CD8-positive, alpha-beta T cell (primary cell): ENCODE measurements at regions of chr10 and their contacts with region 1.

Region 1: DNA sequence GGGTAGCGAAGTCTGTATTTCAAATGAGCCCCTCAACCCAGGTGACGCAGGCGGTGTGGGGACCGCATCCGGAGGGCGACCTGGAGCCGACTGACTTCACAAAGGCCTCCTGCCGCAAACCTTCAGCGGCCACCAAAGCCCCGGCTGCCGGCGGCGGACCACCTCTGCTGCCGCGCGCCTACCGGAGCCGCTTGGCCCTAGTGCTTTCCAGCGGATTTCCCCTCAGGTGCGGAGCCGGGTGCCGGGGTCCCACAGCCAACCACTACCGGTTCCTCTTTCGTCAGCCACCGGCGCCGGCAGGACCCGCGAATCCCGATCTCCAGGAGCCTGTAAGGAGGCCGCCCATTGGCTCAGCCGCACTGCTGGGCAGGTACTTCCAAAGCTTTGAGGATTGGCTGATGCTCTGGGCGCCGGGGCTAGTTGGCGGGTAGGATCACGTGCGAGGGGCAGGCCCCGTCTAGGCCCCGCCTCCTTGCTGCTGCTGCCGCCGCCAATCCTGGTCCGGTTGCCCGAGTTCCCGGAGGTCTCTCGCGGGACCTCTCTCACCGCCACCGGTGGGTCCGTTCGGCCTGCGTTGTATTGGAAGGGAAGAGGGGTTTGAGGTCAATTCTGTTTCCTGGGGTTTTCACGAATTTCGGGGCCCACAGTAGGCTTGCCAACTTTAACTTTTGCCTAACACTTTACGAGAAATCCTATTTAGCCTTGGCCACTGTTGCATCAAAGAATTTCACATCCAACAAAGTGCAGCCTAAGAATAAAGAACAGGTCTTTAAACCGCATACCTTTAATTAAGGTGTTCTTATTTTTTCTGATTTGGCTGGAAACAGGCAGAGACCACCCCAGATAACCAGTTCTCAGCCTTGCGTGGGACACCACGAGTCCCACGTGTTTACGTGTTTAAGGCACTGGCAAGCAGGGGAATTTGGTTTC is at the start of gene GSTO2:
- DNase-seq: peak; percentile 94 to 99 (median 97)
- ATAC-seq: peak; percentile 89
- H3K4me3 ChIP-seq: peak within 1 kb of the TSS; percentile 81 to 82
- H3K4me3 Mint-ChIP-seq: peak within 1 kb of the TSS; percentile 94
- H3K27ac ChIP-seq: peak within 1 kb of the TSS; percentile 90 to 93
- H3K27ac Mint-ChIP-seq: peak within 1 kb of the TSS; percentile 96
- H3K4me1 ChIP-seq: peaks cover 26% of the 10 kb centered on the region
- H3K4me1 Mint-ChIP-seq: peaks cover 48% of the 10 kb centered on the region
- H3K27me3 ChIP-seq: no peaks in the 10 kb centered on the region
- H3K27me3 Mint-ChIP-seq: peaks cover 1% of the 10 kb centered on the region
- CTCF ChIP-seq: no peak
- total RNA-seq, gene GSTO2: 0.49 to 0.75 TPM

Region 2: DNA sequence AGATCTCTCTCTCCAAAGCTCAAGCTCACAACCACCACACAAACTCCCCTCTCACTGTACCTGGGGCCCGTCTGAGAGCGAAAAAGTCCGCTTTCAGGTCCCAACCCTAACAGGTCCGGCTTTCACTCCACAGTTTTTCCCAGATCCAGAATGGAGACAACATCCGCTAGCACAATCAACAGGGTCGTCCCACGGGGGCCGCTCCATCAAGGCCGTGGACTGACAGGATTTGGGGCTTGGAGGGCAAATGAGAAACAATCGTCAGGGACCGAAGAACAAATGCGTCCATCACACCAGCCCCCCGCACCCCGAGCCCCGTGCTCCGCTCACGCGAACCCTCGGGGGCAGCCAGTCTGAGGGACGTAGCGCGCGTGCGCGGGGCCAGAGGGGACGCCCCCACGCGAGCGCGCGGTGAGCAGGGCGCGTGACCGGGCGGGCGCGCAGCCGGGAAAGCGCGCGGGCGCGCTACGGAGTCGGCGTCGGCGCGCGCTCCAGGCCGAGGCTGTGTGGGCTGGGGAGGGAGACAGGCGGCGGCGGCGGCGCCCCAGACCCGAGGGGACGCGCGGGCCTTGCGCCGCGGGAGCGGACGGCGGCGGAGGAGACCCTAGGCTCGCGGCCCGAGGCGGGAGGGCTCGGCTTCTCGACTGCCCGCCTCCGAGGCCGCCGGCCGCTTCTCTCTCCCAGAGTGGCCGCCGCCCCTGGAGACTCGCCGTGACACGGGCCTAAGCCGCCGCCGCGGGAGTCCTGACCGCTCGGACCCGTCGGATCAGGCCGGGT is 302.1 kb before region 1 on chr10 and contains the start of gene SLK:
- CTCF ChIA-PET with region 1: no interaction called
- POLR2A ChIA-PET with region 1: no interaction called
- intact Hi-C with region 1: loop called in 1 of 2 experiments (anchors 5 kb)
- DNase-seq: peak; percentile 72 to 95 (median 84)
- ATAC-seq: peak; percentile 83
- H3K4me3 ChIP-seq: peak within 1 kb of the TSS; percentile 96 to 97
- H3K4me3 Mint-ChIP-seq: peak within 1 kb of the TSS; percentile 96
- H3K27ac ChIP-seq: peak within 1 kb of the TSS; percentile 83 to 86
- H3K27ac Mint-ChIP-seq: peak within 1 kb of the TSS; percentile 89
- H3K4me1 ChIP-seq: peaks cover 14% of the 10 kb centered on the region
- H3K4me1 Mint-ChIP-seq: peaks cover 44% of the 10 kb centered on the region
- H3K27me3 ChIP-seq: no peaks in the 10 kb centered on the region
- H3K27me3 Mint-ChIP-seq: no peaks in the 10 kb centered on the region
- CTCF ChIP-seq: no peak
- total RNA-seq, gene SLK: 23.8 to 24.6 TPM

Region 3: DNA sequence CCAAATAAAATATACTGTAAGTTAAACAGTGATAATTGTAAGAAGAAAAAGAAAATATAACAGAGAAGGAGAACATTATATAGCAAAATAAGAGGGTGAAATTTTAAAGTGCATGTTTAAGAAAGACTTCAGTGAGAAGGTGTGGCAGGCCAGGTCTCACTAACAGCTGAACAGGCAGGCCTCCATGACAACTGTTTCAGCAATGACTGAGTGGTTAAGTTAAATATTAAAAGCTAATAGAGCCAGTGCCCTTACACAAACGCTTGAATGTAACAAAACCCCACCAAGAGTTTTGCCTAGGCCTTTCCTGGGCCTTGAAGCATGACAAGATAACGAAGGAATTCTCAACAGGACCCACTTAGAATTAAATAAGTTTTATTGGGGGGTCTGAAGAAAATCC is 69.4 kb before region 1 on chr10:
- CTCF ChIA-PET with region 1: no interaction called
- POLR2A ChIA-PET with region 1: no interaction called
- intact Hi-C with region 1: no loop called
- DNase-seq: no peak
- ATAC-seq: no peak
- H3K4me3 ChIP-seq: no peak overlapping the region
- H3K4me3 Mint-ChIP-seq: no peak overlapping the region
- H3K27ac ChIP-seq: no peak overlapping the region
- H3K27ac Mint-ChIP-seq: no peak overlapping the region
- H3K4me1 ChIP-seq: no peaks in the 10 kb centered on the region
- H3K4me1 Mint-ChIP-seq: no peaks in the 10 kb centered on the region
- H3K27me3 ChIP-seq: no peaks in the 10 kb centered on the region
- H3K27me3 Mint-ChIP-seq: no peaks in the 10 kb centered on the region
- CTCF ChIP-seq: no peak

Region 4: GRCh38 chr10:104254493-104255310 is 14.3 kb before region 1 on chr10 and contains the start of gene GSTO1:
- CTCF ChIA-PET with region 1: interaction called, 30 read pairs
- POLR2A ChIA-PET with region 1: interaction called, 23 read pairs
- intact Hi-C with region 1: loop called in 1 of 2 experiments (anchors 1 kb)
- DNase-seq: peak in 8 of 9 experiments; percentile 37 to 76 (median 52)
- ATAC-seq: peak; percentile 59
- H3K4me3 ChIP-seq: peak within 1 kb of the TSS; percentile 81 to 84
- H3K4me3 Mint-ChIP-seq: peak within 1 kb of the TSS; percentile 91
- H3K27ac ChIP-seq: peak within 1 kb of the TSS; percentile 62 to 78
- H3K27ac Mint-ChIP-seq: peak within 1 kb of the TSS; percentile 94
- H3K4me1 ChIP-seq: peaks cover 20% of the 10 kb centered on the region
- H3K4me1 Mint-ChIP-seq: peaks cover 49% of the 10 kb centered on the region
- H3K27me3 ChIP-seq: no peaks in the 10 kb centered on the region
- H3K27me3 Mint-ChIP-seq: no peaks in the 10 kb centered on the region
- CTCF ChIP-seq: no peak
- total RNA-seq, gene GSTO1: 9.8 to 11.8 TPM

Region 5: DNA sequence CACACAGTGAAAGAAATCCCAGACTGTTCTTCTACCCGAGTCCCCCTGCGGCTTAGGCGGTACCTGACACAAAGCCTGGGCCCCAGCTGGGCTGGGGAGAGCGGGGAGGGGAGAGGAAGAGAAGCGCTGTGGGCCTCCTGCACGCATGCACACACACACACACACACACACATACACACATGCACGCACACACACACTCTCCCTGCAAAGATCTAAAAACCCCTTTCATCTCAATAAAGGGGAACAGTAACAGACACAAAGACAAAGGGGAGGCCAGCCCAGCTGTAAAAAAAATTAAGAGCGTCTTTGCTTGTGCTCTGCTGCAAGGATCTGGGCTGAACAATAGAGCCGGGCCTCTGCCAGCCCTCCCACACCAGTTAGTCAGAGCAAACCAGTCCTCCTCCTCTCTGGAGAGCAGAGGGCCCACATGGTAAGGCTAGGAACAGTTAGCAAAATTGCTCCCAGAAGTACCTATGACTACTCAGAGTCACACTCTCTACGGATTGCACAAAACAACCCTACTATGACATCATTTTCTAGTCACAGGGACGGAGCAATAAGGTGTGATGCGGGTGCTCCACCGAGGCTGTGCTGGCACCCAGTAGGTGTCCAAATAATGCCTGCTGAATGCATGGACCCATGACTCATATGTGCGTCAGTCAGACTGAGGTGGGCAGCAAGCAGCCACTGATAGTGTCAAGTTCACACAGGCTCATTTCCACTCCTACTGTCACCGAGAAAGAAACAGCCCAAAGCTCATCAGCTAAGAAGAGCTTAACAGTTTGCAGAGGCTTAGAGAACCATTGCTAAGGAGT is 60.1 kb after region 1 on chr10:
- CTCF ChIA-PET with region 1: interaction called, 15 read pairs
- POLR2A ChIA-PET with region 1: no interaction called
- intact Hi-C with region 1: loop called in 1 of 2 experiments (anchors 2 kb)
- DNase-seq: peak; percentile 51 to 96 (median 79)
- ATAC-seq: peak; percentile 71
- H3K4me3 ChIP-seq: peak overlapping the region; percentile 9 to 39
- H3K4me3 Mint-ChIP-seq: peak overlapping the region; percentile 78
- H3K27ac ChIP-seq: peak overlapping the region; percentile 67 to 79
- H3K27ac Mint-ChIP-seq: peak overlapping the region; percentile 97
- H3K4me1 ChIP-seq: peaks cover 95% of the 10 kb centered on the region
- H3K4me1 Mint-ChIP-seq: peaks cover 98% of the 10 kb centered on the region
- H3K27me3 ChIP-seq: no peaks in the 10 kb centered on the region
- H3K27me3 Mint-ChIP-seq: no peaks in the 10 kb centered on the region
- CTCF ChIP-seq: no peak

Region 6: DNA sequence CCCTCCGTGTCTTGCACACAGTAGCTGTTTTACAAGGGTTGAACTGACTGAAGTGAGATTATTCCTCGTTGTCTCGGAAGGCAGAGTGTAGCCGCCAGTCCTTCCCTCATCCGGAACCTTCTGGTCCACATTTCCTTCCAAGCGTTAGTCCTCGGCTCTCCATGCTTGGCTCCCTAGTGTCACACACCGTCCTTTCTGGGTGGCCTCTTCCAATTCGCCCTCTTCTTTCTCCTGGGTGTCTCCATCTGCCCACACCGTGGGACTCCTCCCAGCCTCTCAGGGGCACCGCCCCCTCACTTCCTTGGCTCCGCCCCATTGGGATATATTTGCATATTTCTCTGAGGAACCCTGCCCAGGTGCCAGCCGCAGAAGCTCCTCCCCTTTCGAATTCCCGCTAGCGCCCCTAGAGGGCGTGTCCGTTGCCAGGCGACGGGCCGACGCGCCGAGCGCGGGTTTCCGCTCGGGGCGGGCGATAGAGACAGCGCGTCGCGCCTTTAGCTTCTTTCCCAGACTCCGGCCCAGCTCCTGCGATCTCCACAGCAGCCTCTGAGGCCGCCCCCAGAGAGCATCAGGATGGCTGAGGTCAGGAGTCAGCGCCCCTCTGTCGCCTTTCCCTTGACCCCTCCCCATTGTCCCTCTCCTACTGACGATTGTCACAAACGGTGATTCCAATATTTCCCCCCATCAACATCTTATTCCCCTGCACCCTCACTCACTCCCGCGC is 84.5 kb after region 1 on chr10 and contains the start of gene CFAP58:
- CTCF ChIA-PET with region 1: interaction called, 112 read pairs
- POLR2A ChIA-PET with region 1: interaction called, 3 read pairs
- intact Hi-C with region 1: loop called in 1 of 2 experiments (anchors 1 kb)
- DNase-seq: peak; percentile 76 to 95 (median 89)
- ATAC-seq: peak; percentile 84
- H3K4me3 ChIP-seq: peak within 1 kb of the TSS; percentile 46 to 53
- H3K4me3 Mint-ChIP-seq: peak within 1 kb of the TSS; percentile 44
- H3K27ac ChIP-seq: peak within 1 kb of the TSS in 1 of 2 experiments; percentile 58
- H3K27ac Mint-ChIP-seq: peak within 1 kb of the TSS; percentile 73
- H3K4me1 ChIP-seq: peaks cover 19% of the 10 kb centered on the region
- H3K4me1 Mint-ChIP-seq: peaks cover 2% of the 10 kb centered on the region
- H3K27me3 ChIP-seq: no peaks in the 10 kb centered on the region
- H3K27me3 Mint-ChIP-seq: no peaks in the 10 kb centered on the region
- CTCF ChIP-seq: peak; percentile 74
- total RNA-seq, gene CFAP58: not detected